GM12878 (cell line): ENCODE measurements at regions of chr2 and their contacts with region 1.

Region 1: GRCh38 chr2:82344670-82345069 is 2040.1 kb upstream of the LRRTM1 start:
- DNase-seq: no peak
- ATAC-seq: no peak
- H3K4me3 ChIP-seq: no peak overlapping the region
- H3K27ac ChIP-seq: no peak overlapping the region
- H3K4me1 ChIP-seq: no peaks in the 10 kb centered on the region; the same call in 1 of the 2 replicates
- H3K27me3 ChIP-seq: no peaks in the 10 kb centered on the region
- CTCF ChIP-seq: peak in 2 of 3 experiments; percentile 7 to 23; a peak in 1 of 6 replicates
- EP300 ChIP-seq: no peak
- POLR2A ChIP-seq: no peak
- RAD21 ChIP-seq: no peak

Region 2: GRCh38 chr2:82317012-82317411 is 27.7 kb before region 1 on chr2:
- CTCF ChIA-PET with region 1: no interaction called
- POLR2A ChIA-PET with region 1: interaction called, 4 read pairs
- RAD21 ChIA-PET with region 1: interaction called, 4 read pairs
- SMC1A ChIA-PET with region 1: interaction called, 14 read pairs
- in situ Hi-C with region 1: no loop called
- intact Hi-C with region 1: no loop called
- DNase-seq: no peak
- ATAC-seq: no peak
- H3K4me3 ChIP-seq: no peak overlapping the region
- H3K27ac ChIP-seq: no peak overlapping the region
- H3K4me1 ChIP-seq: no peaks in the 10 kb centered on the region
- H3K27me3 ChIP-seq: no peaks in the 10 kb centered on the region
- CTCF ChIP-seq: no peak
- EP300 ChIP-seq: no peak
- POLR2A ChIP-seq: no peak
- RAD21 ChIP-seq: no peak

Region 3: GRCh38 chr2:82330155-82330554 is 14.5 kb before region 1 on chr2:
- CTCF ChIA-PET with region 1: interaction called, 8 read pairs
- POLR2A ChIA-PET with region 1: interaction called, 13 read pairs
- RAD21 ChIA-PET with region 1: interaction called, 49 read pairs
- SMC1A ChIA-PET with region 1: interaction called, 71 read pairs
- in situ Hi-C with region 1: no loop called
- intact Hi-C with region 1: no loop called
- DNase-seq: no peak
- ATAC-seq: peak; percentile 96
- H3K4me3 ChIP-seq: no peak overlapping the region
- H3K27ac ChIP-seq: no peak overlapping the region
- H3K4me1 ChIP-seq: no peaks in the 10 kb centered on the region
- H3K27me3 ChIP-seq: no peaks in the 10 kb centered on the region
- CTCF ChIP-seq: no peak
- EP300 ChIP-seq: peak in 1 of 2 experiments; percentile 58; a peak in 1 of 4 replicates
- POLR2A ChIP-seq: no peak
- RAD21 ChIP-seq: no peak

Region 4: GRCh38 chr2:82395531-82395930 is 50.9 kb after region 1 on chr2:
- CTCF ChIA-PET with region 1: interaction called, 3 read pairs
- POLR2A ChIA-PET with region 1: no interaction called
- RAD21 ChIA-PET with region 1: interaction called, 5 read pairs
- SMC1A ChIA-PET with region 1: interaction called, 15 read pairs
- in situ Hi-C with region 1: no loop called
- intact Hi-C with region 1: no loop called
- DNase-seq: no peak
- ATAC-seq: no peak
- H3K4me3 ChIP-seq: no peak overlapping the region
- H3K27ac ChIP-seq: no peak overlapping the region
- H3K4me1 ChIP-seq: no peaks in the 10 kb centered on the region
- H3K27me3 ChIP-seq: no peaks in the 10 kb centered on the region
- CTCF ChIP-seq: no peak
- EP300 ChIP-seq: no peak
- POLR2A ChIP-seq: no peak
- RAD21 ChIP-seq: no peak

Region 5: DNA sequence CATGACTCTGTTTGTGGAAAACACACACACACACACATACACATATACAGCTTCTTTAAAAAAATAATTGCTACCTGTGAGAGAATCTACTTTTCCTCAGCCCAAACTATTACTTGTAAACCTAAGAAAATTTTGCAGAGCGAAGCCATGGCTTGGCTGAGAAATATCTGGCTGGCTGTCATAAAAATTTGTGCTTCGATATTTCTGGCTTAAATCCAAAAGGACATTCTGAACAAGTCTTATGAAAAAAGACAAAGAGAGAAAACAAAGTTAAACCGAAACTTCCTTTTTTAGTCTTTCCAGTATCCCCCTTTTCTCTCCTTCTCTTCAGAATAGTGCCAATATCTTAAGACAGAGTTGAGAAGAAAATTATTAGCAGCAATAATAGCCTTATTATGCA is 66.4 kb after region 1 on chr2:
- CTCF ChIA-PET with region 1: interaction called, 3 read pairs
- POLR2A ChIA-PET with region 1: no interaction called
- RAD21 ChIA-PET with region 1: interaction called, 8 read pairs
- SMC1A ChIA-PET with region 1: interaction called, 10 read pairs
- in situ Hi-C with region 1: no loop called
- intact Hi-C with region 1: no loop called
- DNase-seq: no peak
- ATAC-seq: no peak
- H3K4me3 ChIP-seq: no peak overlapping the region
- H3K27ac ChIP-seq: no peak overlapping the region
- H3K4me1 ChIP-seq: no peaks in the 10 kb centered on the region
- H3K27me3 ChIP-seq: no peaks in the 10 kb centered on the region
- CTCF ChIP-seq: no peak
- EP300 ChIP-seq: no peak
- POLR2A ChIP-seq: no peak
- RAD21 ChIP-seq: no peak

Region 6: DNA sequence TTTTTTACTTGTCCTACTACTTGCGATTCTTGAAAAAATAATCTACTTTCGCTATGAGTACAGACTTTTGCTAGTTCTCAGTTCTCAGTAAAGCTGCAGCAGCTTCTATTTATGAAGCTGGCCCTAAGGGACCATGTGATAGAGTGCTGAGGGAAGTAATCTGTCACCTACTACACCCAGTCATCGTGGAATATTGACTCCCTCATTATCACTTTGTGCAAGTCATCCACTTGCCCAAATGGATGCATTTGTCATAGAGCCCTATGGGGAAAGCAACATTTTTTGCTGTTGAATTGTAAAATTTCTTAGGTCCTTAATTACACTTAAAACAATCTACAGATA is 194.6 kb after region 1 on chr2:
- CTCF ChIA-PET with region 1: no interaction called
- POLR2A ChIA-PET with region 1: no interaction called
- RAD21 ChIA-PET with region 1: interaction called, 5 read pairs
- SMC1A ChIA-PET with region 1: interaction called, 13 read pairs
- in situ Hi-C with region 1: no loop called
- intact Hi-C with region 1: no loop called
- DNase-seq: no peak
- ATAC-seq: peak; percentile 95
- H3K4me3 ChIP-seq: no peak overlapping the region
- H3K27ac ChIP-seq: no peak overlapping the region
- H3K4me1 ChIP-seq: no peaks in the 10 kb centered on the region
- H3K27me3 ChIP-seq: no peaks in the 10 kb centered on the region
- CTCF ChIP-seq: no peak
- EP300 ChIP-seq: no peak
- POLR2A ChIP-seq: no peak
- RAD21 ChIP-seq: no peak